GM13976 (cell line): ENCODE measurements at regions of chr10 and their contacts with region 1.

Region 1: DNA sequence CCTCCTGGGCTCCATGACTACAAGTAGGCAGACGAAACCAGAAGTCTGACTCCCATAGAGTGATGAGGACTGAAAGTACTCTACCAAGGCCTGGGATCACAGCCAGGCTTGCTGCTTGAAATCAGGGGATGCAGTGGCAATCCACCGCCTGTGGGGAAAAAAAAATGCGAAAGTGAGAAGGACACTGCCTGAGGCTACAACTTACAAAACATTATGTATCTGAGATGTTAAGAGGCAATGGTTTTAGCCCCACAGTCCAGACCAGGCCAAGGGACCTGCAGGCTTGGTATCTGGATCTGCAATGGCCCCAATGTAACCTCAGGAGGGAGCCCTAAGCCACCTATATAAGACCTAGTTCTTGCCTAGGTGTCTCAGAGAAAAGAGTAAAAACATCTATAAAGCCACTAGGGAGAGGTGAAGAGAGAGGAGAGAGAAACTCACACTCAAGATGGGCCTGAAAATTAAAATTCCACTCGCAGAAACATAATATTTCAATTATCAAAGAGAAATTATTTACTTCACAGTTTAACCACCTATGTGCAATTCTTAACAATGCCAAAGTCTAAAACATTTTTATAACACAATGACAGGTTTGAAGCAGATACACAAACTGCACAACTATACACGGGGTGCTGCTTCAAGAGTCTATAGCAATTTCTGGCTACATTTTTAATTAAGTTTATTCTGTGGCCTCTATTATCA is 13.9 kb downstream of the DNAJC1 start:
- DNase-seq: peak; percentile 45
- CTCF ChIP-seq: peak; percentile 51

Region 2: GRCh38 chr10:21584834-21585530 is 404.6 kb before region 1 on chr10:
- in situ Hi-C with region 1: no loop called
- DNase-seq: no peak
- CTCF ChIP-seq: no peak

Region 3: DNA sequence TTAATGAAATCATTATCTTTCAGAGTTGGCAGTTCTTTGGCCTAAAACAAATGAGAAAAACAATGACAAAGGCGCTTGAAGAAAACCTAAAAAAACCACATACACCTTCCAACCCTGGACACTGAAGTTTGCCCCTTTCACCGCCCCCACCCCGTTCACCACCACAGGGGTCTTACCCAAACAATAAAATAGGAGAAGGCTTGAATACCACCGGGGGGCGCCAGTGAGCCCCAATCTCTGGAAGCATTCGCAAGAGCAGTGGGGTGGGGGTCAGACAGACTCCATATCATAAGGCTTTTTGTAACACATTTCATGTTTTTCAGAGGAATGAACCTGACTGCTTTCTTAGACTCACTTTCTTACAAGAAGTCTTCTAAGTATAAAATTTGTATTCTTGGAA is 561.1 kb after region 1 on chr10:
- in situ Hi-C with region 1: loop called (anchors 25 kb)
- DNase-seq: no peak
- CTCF ChIP-seq: peak; percentile 45